ENCODE measurements at regions of chr7 and their contacts with region 1.

Region 1: DNA sequence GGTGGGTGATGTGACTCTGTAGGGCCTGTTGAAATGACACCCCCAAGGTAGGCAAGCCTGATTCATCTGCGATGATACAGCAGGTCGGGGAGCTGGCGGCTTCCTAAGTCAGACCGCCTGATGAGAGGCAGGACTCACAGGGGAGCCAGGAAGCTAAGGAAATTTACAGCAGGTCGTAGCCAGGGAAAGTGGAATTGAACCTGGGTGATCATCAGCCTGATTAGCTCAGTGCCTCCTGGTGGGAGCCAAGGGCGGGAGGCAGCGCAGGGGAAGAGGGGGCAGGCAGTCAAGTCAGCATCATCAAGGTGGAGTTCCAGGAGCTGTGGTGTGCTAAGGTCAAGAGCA is 18.5 kb upstream of the TRIM56 start:
- DNase-seq: no peak
- ATAC-seq: no peak
- H3K4me3 ChIP-seq: no peak overlapping the region
- H3K4me3 Mint-ChIP-seq: no peak overlapping the region
- H3K27ac ChIP-seq: no peak overlapping the region
- H3K27ac Mint-ChIP-seq: no peak overlapping the region
- H3K4me1 ChIP-seq: no peaks in the 10 kb centered on the region
- H3K4me1 Mint-ChIP-seq: no peaks in the 10 kb centered on the region
- H3K27me3 ChIP-seq: peaks cover 2 to 60% of the 10 kb centered on the region in 2 experiments
- H3K27me3 Mint-ChIP-seq: peaks cover 35 to 41% of the 10 kb centered on the region in 2 donors

Region 2: GRCh38 chr7:101089876-101090275 is 23.1 kb after region 1 on chr7:
- CTCF ChIA-PET with region 1: no interaction called
- POLR2A ChIA-PET with region 1: interaction called in 1 of 2 experiments, 11 read pairs
- DNase-seq: no peak
- ATAC-seq: no peak
- H3K4me3 ChIP-seq: no peak overlapping the region
- H3K4me3 Mint-ChIP-seq: no peak overlapping the region
- H3K27ac ChIP-seq: no peak overlapping the region
- H3K27ac Mint-ChIP-seq: no peak overlapping the region
- H3K4me1 ChIP-seq: peaks cover 8 to 55% of the 10 kb centered on the region in 2 experiments
- H3K4me1 Mint-ChIP-seq: peaks cover 18 to 54% (median 39%) of the 10 kb centered on the region in 3 donors
- H3K27me3 ChIP-seq: no peaks in the 10 kb centered on the region
- H3K27me3 Mint-ChIP-seq: no peaks in the 10 kb centered on the region

Measured in T-cell (primary cell).